WTC11 (cell line): ENCODE measurements at regions of chr11 and their contacts with region 1.

Region 1: DNA sequence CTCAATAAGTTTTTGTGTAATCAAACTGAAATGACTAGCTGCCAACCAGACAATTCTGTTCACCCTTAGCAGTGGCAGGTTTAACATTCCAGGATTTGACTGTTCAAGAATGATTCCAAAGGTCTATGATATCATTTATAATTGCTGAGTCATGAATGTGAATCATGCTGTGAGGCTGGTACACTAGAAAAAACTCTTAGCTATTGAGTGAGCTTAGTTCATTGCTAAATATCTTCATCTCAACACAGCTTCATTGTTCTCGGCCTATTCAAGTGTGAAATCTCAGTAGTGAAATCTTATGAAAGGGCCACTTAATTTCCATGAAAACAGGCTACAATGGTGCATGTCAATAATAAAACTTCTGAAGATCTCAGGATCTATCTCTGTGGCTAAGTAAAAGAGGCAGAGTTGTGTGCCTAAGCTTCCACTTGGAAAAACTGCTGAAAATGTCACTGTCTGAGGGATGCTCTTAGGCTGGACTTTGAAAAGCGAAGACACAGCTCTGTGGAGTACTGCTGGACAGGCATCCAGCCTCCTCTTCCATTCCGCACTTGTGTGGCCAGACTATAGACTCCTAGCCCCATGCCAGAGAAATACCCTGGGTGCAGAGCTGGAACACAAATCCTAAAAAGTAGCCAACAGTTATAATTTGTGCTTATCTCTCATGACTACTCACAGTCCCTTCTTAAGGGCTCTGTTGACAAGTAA is 12.8 kb downstream of the AQP11 start:
- DNase-seq: no peak
- ATAC-seq: peak; percentile 32; the same call in 1 of the 2 replicates
- H3K4me3 Mint-ChIP-seq: no peak overlapping the region
- H3K27ac Mint-ChIP-seq: no peak overlapping the region
- H3K4me1 Mint-ChIP-seq: peaks cover 6% of the 10 kb centered on the region
- H3K27me3 Mint-ChIP-seq: no peaks in the 10 kb centered on the region
- CTCF ChIP-seq: no peak

Region 2: DNA sequence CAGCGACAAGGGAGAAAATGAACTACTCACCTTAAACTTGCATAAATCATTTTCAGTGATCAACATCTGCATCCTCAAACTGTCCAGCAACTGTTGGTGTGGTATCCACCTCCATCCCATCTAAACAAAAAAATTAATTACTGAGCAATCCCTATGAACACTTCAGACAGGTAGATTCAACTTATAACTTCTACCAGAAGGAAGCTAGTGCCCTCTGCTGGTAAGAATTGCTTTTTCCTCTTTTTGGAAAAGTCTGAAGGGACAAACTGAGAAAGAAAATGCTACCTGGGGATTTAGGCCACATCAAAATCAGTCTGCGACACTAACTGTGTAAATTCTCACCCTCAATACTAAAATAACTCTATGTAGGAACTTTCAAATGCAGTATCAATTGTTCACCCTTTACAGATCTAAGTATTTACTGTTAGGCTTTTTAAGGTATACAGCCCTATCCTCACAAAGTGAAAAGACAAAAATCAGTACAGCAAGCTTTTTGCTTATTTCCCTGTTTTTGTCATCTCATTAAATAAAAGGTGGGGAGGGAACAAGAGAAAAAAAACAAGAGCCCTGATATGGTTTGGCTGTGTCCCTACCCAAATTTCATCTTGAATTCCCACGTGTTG is 17.2 kb after region 1 on chr11:
- CTCF ChIA-PET with region 1: interaction called, 10 read pairs
- POLR2A ChIA-PET with region 1: interaction called, 4 read pairs
- DNase-seq: no peak
- ATAC-seq: no peak
- H3K4me3 Mint-ChIP-seq: no peak overlapping the region
- H3K27ac Mint-ChIP-seq: no peak overlapping the region
- H3K4me1 Mint-ChIP-seq: no peaks in the 10 kb centered on the region
- H3K27me3 Mint-ChIP-seq: no peaks in the 10 kb centered on the region
- CTCF ChIP-seq: no peak; the same call in 1 of the 2 replicates